H1 (cell line): ENCODE measurements at regions of chr2 and their contacts with region 1.

Region 1: GRCh38 chr2:60674524-60675165 is 81.4 kb upstream of the PAPOLG start:
- DNase-seq: peak; percentile 63 to 94
- H3K4me3 ChIP-seq: no peak overlapping the region
- H3K27ac ChIP-seq: no peak overlapping the region
- H3K4me1 ChIP-seq: peaks cover 0 to 4% (median 3%) of the 10 kb centered on the region in 4 experiments; a peak in 3 of 7 replicates
- H3K27me3 ChIP-seq: no peaks in the 10 kb centered on the region
- CTCF ChIP-seq: peak; percentile 94 to 100 (median 99)
- EP300 ChIP-seq: no peak
- POLR2A ChIP-seq: no peak
- RAD21 ChIP-seq: peak; percentile 80 to 89

Region 2: DNA sequence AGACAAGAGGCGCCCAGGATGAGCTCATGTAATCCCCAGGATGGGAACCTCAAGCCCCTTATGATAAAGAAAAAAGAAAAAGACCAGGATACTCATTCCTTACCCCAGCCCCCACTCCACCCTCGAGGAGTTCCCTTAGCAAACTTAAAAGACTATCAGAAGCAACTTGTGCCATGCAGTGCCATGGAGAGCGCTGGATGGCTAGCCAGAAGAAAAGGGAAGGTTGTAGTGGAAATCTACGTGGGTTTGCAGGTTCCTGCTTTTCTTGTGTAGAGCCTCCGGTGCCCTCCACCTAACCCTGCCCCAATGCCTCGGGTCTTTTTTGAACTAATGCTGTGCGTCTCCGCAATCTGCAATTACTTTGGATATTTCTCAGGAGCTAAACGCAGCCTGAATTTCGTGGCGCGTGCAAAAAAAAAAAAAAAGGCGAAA is 104.9 kb before region 1 on chr2:
- CTCF ChIA-PET with region 1: interaction called, 14 read pairs
- POLR2A ChIA-PET with region 1: no interaction called
- DNase-seq: peak in 1 of 2 experiments; percentile 53
- H3K4me3 ChIP-seq: peak overlapping the region; percentile 43 to 67 (median 57); a peak in 7 of 8 replicates
- H3K27ac ChIP-seq: no peak overlapping the region
- H3K4me1 ChIP-seq: peaks cover 4 to 14% (median 9%) of the 10 kb centered on the region in 4 experiments; a peak in 6 of 7 replicates
- H3K27me3 ChIP-seq: peaks cover 0 to 18% (median 14%) of the 10 kb centered on the region in 4 experiments; a peak in 6 of 7 replicates
- CTCF ChIP-seq: no peak
- EP300 ChIP-seq: no peak
- POLR2A ChIP-seq: no peak
- RAD21 ChIP-seq: no peak

Region 3: GRCh38 chr2:60629305-60629662 is 45.4 kb before region 1 on chr2:
- CTCF ChIA-PET with region 1: interaction called, 10 read pairs
- POLR2A ChIA-PET with region 1: no interaction called
- DNase-seq: no peak
- H3K4me3 ChIP-seq: no peak overlapping the region
- H3K27ac ChIP-seq: no peak overlapping the region
- H3K4me1 ChIP-seq: no peaks in the 10 kb centered on the region; a peak in 1 of 7 replicates
- H3K27me3 ChIP-seq: no peaks in the 10 kb centered on the region
- CTCF ChIP-seq: no peak
- EP300 ChIP-seq: no peak
- POLR2A ChIP-seq: no peak
- RAD21 ChIP-seq: no peak

Region 4: DNA sequence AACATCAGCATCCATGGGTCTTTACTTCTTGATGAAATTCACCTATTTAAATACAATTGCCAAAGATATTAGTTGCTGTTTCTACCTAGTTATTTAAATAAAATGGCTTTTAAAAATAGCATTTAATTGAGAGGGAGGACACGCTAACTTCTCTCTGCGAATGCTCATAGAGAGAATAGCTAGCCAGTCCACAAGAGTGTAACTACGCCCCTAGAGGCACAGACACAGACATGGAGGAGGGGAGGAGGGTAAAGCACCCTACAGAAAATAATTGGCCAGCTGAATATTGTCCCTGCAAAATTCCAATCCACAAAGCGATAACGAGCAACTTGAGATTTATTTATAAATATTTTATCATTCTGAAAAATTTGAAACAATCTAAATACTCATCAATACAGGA is 15.6 kb before region 1 on chr2:
- CTCF ChIA-PET with region 1: interaction called, 39 read pairs
- POLR2A ChIA-PET with region 1: no interaction called
- DNase-seq: no peak
- H3K4me3 ChIP-seq: no peak overlapping the region
- H3K27ac ChIP-seq: no peak overlapping the region
- H3K4me1 ChIP-seq: no peaks in the 10 kb centered on the region
- H3K27me3 ChIP-seq: peaks cover 0 to 2% (median 0%) of the 10 kb centered on the region in 4 experiments; a peak in 1 of 7 replicates
- CTCF ChIP-seq: peak in 2 of 3 experiments; percentile 31 to 37; a peak in 3 of 4 replicates
- EP300 ChIP-seq: no peak
- POLR2A ChIP-seq: no peak
- RAD21 ChIP-seq: peak in 1 of 2 experiments; percentile 10; a peak in 1 of 4 replicates